ENCODE measurements at regions of chr16 and their contacts with region 1.

Region 1: DNA sequence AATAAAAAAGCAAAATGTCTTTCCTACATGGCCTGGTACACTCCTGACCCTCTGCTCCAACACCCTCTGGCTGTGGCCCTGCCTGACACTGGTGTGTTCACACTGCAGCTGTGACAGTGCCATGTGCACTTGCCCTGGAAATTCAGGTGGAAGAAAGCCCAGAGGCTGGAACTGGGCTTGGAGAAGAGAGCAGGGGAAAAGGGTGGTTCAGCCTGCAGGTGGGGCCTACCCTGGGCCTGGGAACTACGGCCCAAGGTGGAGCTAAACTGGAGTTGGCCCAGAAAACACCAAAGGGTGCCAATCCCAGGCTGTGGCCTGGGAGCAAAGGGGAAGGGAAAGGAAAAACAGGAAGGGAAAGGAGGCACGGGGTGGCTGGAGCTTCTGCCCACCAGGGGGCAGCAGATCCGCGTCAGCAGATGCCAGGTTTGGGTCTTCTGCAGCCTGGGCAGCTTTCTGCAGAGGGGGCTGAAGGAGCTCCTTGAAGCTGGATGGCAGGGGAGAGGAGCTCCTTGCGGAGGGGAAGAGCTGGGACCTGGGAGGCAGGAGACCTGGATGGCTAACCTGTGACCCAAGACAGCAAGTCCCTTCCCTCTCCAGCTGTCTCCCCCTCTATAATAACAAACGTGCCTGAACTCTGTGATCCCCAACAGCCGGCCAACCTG is 15.4 kb upstream of the CTCF start:
- DNase-seq: peak; percentile 79
- ATAC-seq: peak; percentile 32
- H3K4me3 Mint-ChIP-seq: no peak overlapping the region
- H3K27ac Mint-ChIP-seq: peak overlapping the region; percentile 90
- H3K4me1 Mint-ChIP-seq: peaks cover 40% of the 10 kb centered on the region
- H3K27me3 Mint-ChIP-seq: no peaks in the 10 kb centered on the region
- CTCF ChIP-seq: peak; percentile 99

Region 2: DNA sequence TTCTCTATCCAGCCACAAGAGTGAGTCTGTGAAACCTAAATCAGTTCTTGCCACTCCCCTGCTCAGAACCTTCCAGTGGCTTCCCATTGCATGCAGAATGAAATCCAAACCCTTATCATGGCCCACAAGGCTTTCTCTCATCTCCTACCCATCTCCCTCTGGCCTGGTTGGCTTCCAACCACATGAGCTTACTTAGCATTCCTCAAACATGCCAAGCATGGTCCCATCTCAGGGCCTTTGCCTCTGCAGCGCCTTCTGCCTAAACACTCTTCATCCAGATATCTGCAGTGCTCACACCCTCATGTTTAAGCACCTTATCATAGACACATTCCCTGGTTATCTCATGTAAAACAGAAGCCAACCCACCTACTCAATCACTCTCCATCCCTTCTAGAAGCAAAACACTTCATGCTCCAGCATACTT is 1012.5 kb before region 1 on chr16:
- CTCF ChIA-PET with region 1: no interaction called
- POLR2A ChIA-PET with region 1: no interaction called
- intact Hi-C with region 1: no loop called
- DNase-seq: no peak
- ATAC-seq: no peak
- H3K4me3 Mint-ChIP-seq: no peak overlapping the region
- H3K27ac Mint-ChIP-seq: no peak overlapping the region
- H3K4me1 Mint-ChIP-seq: peaks cover 10% of the 10 kb centered on the region
- H3K27me3 Mint-ChIP-seq: no peaks in the 10 kb centered on the region
- CTCF ChIP-seq: no peak

Region 3: DNA sequence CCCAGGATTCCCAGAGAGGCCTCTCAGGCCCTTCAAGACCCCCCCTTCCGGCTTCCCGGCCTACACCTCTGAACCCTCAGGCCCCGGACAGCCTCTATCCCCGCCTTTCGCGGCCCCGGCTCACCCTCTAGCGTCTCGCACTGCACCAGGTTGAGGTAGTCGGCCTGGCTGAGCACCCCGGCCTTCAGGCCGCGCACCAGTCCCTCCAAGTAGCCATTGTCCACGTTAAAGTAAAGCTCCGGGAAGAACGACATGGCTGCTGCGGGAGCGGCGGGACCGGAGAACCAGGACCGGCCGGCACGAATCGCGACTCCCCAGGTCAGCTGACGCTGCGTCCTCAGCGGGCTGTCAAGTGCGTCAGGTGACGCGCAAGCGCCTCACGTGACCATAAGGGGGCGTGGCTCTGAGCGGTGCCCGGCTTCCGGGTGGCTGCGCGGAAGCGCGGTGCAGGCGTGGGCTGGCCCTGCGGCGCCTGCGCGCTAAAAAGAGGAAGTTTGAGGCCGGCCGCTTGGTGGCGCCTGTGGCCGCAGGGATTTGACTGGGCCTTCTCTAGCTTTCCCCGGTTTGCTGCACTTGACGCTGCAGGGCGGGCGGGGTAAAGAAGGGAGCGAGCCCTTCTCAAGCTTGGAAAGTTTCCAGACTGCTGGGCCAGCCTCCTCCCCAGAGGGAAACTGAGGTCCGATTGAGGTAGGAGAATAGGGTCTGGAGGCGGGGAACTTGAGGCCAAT is 65.9 kb before region 1 on chr16 and contains the start of gene ATP6V0D1:
- CTCF ChIA-PET with region 1: interaction called, 11 read pairs
- POLR2A ChIA-PET with region 1: no interaction called
- intact Hi-C with region 1: no loop called
- DNase-seq: peak; percentile 99
- ATAC-seq: peak; percentile 92
- H3K4me3 Mint-ChIP-seq: peak within 1 kb of the TSS; percentile 93
- H3K27ac Mint-ChIP-seq: peak within 1 kb of the TSS; percentile 99
- H3K4me1 Mint-ChIP-seq: peaks cover 30% of the 10 kb centered on the region
- H3K27me3 Mint-ChIP-seq: no peaks in the 10 kb centered on the region
- CTCF ChIP-seq: peak; percentile 75
- total RNA-seq, gene ATP6V0D1: 17.5 to 18.2 TPM

Region 4: GRCh38 chr16:67506468-67506867 is 40.4 kb before region 1 on chr16:
- CTCF ChIA-PET with region 1: no interaction called
- POLR2A ChIA-PET with region 1: no interaction called
- intact Hi-C with region 1: no loop called
- DNase-seq: no peak
- ATAC-seq: no peak
- H3K4me3 Mint-ChIP-seq: no peak overlapping the region
- H3K27ac Mint-ChIP-seq: peak overlapping the region; percentile 43
- H3K4me1 Mint-ChIP-seq: peaks cover 40% of the 10 kb centered on the region
- H3K27me3 Mint-ChIP-seq: no peaks in the 10 kb centered on the region
- CTCF ChIP-seq: no peak

Region 5: GRCh38 chr16:67571981-67572431 is 25.1 kb after region 1 on chr16:
- CTCF ChIA-PET with region 1: interaction called, 26 read pairs
- POLR2A ChIA-PET with region 1: no interaction called
- intact Hi-C with region 1: no loop called
- DNase-seq: no peak
- ATAC-seq: no peak
- H3K4me3 Mint-ChIP-seq: no peak overlapping the region
- H3K27ac Mint-ChIP-seq: peak overlapping the region; percentile 13
- H3K4me1 Mint-ChIP-seq: peaks cover 21% of the 10 kb centered on the region
- H3K27me3 Mint-ChIP-seq: no peaks in the 10 kb centered on the region
- CTCF ChIP-seq: no peak

Region 6: DNA sequence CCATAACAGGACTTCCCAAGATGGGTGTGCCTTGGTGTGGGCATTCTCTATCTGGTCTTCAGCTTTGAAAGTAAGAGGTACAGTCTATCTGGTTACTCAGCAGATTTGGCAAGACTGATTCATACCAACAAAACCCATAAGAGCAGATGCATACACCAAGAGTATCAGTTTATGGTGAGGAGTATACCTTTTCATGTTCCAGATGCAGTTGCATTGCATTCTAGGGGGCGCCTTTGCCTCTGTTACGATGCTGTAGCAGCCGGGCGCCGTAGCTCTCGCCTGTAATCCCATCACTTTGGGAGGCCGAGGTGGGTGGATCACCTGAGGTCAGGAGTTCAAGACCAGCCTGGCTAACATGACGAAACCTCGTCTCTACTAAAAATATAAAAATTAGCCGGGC is 66.9 kb after region 1 on chr16:
- CTCF ChIA-PET with region 1: interaction called, 19 read pairs
- POLR2A ChIA-PET with region 1: no interaction called
- intact Hi-C with region 1: no loop called
- DNase-seq: peak; percentile 51
- ATAC-seq: no peak
- H3K4me3 Mint-ChIP-seq: no peak overlapping the region
- H3K27ac Mint-ChIP-seq: no peak overlapping the region
- H3K4me1 Mint-ChIP-seq: peaks cover 2% of the 10 kb centered on the region
- H3K27me3 Mint-ChIP-seq: no peaks in the 10 kb centered on the region
- CTCF ChIP-seq: no peak

Region 7: GRCh38 chr16:67660564-67661028 is 113.7 kb after region 1 on chr16 and contains the start of gene PARD6A:
- CTCF ChIA-PET with region 1: interaction called, 15 read pairs
- POLR2A ChIA-PET with region 1: interaction called, 4 read pairs
- intact Hi-C with region 1: no loop called
- DNase-seq: peak; percentile 98
- ATAC-seq: peak; percentile 82
- H3K4me3 Mint-ChIP-seq: peak within 1 kb of the TSS; percentile 90
- H3K27ac Mint-ChIP-seq: peak within 1 kb of the TSS; percentile 92
- H3K4me1 Mint-ChIP-seq: peaks cover 18% of the 10 kb centered on the region
- H3K27me3 Mint-ChIP-seq: no peaks in the 10 kb centered on the region
- CTCF ChIP-seq: no peak
- total RNA-seq, gene PARD6A: 6.3 to 7.2 TPM

Measured in activated CD8-positive, alpha-beta T cell treated with anti-CD3 and anti-CD28 coated beads for 36 hours (primary cell).